A549 (cell line): ENCODE measurements at regions of chr11 and their contacts with region 1.

Region 1: GRCh38 chr11:120172054-120172911 is 34.4 kb upstream of the TRIM29 start:
- DNase-seq: peak; percentile 50 to 64
- ATAC-seq: peak; percentile 55 to 73
- H3K4me3 ChIP-seq: no peak overlapping the region
- H3K27ac ChIP-seq: no peak overlapping the region
- H3K4me1 ChIP-seq: 0 out of 3 replicates have a peak, but pooled peaks cover 3% of the 10 kb centered on the region
- CTCF ChIP-seq: peak; percentile 56
- EP300 ChIP-seq: no peak
- POLR2A ChIP-seq: no peak
- RAD21 ChIP-seq: peak; percentile 79 to 87

Region 2: DNA sequence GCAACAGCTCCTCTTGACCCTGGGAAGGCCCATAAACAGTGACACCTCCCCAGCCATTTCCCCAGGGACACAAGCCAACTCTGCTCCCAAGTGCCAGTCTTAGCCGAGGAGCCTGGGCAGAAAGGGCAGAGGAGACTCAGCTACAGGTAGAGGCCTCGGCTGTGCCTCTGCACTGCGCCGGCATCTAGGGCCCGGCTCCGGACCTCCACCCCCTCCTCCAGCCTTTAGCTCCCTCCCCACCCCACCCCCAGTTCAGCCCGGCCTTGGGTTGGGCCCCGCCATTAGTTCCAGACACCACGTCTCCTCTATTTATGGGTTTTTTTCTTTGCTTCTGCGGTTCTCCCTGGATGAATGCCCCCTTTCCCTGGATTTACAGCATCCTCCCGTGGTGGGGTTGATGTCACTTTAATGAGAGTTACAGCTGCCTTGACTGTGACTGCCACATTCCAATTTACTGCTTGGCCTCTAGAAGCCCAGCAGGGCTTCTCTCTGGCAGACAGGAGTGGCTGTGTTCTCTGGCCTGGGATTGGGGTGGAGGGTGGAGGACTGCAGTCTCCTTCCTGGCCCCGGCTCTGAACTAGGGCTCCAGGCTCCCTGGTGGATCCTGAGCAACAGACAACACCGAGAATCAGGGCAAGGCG is 25.1 kb after region 1 on chr11:
- CTCF ChIA-PET with region 1: interaction called, 24 read pairs
- POLR2A ChIA-PET with region 1: no interaction called
- DNase-seq: no peak
- ATAC-seq: no peak
- H3K4me3 ChIP-seq: no peak overlapping the region
- H3K27ac ChIP-seq: no peak overlapping the region
- H3K4me1 ChIP-seq: no peaks in the 10 kb centered on the region
- CTCF ChIP-seq: no peak
- EP300 ChIP-seq: no peak
- POLR2A ChIP-seq: no peak
- RAD21 ChIP-seq: no peak

Region 3: DNA sequence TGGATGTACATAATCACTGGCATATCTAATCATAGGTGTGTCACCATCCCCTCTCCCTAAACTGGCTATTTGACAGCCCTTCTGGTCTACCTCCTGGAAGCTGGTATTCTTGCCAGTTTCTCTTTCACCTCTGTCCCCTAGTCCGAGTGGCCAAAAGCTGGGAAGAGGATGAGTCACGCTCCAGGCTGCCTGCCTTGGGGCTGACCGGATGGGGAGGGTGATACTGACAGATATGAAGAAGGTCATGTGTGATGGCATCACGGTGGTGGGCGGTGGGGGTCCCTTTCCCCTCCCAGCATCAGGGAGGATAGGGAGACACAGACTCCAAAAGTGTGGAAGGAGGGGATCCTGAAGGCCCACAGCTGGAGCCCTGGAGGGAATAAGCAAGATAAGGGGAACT is 43.4 kb after region 1 on chr11:
- CTCF ChIA-PET with region 1: interaction called, 27 read pairs
- POLR2A ChIA-PET with region 1: no interaction called
- DNase-seq: no peak
- ATAC-seq: no peak
- H3K4me3 ChIP-seq: no peak overlapping the region
- H3K27ac ChIP-seq: no peak overlapping the region
- H3K4me1 ChIP-seq: 0 out of 3 replicates have a peak, but pooled peaks cover 7% of the 10 kb centered on the region
- CTCF ChIP-seq: no peak
- EP300 ChIP-seq: no peak
- POLR2A ChIP-seq: no peak
- RAD21 ChIP-seq: no peak

Region 4: DNA sequence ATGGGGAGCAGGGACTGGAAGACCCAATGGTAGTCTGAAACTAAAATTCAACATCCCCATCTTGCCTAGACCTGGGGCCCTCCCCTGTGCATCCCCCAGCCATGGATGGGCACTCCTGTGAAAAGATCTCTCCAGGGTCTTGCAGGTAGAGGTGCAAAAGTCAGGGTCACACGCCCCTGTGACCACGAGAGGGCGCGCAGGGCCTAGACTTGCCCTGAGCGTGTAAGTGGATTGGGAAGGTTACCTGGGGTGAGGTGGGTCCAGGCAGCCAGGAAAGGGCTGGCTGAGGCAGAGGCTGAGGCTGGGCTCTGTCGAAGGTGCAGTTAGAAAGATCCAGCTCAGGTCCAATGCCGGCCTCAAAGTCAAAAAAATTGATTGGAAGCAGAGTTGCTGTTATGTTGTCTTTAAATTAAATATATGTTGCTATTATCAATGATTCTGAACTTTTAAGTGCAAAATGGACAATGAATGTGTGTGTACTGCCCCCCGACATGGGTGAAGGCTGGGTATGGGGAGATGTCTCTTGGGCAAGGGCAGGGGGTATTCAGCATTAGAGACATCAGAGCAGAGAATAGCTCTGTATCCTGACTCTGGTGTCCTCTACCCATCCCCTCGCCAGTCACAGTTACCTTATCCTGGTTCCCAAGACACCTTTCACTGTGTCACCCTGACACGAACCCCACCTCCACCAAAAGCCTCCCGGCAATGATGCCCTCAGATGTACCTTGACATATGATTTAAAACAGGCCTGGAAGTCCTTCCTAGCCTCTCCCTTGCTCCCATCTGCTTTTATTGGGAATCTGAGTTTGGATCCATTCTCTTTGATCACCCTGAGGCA is 63.0 kb after region 1 on chr11:
- CTCF ChIA-PET with region 1: interaction called, 245 read pairs
- POLR2A ChIA-PET with region 1: no interaction called
- DNase-seq: peak; percentile 64 to 68
- ATAC-seq: peak; percentile 82 to 91; a peak in 5 of 6 replicates
- H3K4me3 ChIP-seq: no peak overlapping the region
- H3K27ac ChIP-seq: no peak overlapping the region
- H3K4me1 ChIP-seq: no peaks in the 10 kb centered on the region
- CTCF ChIP-seq: peak; percentile 66
- EP300 ChIP-seq: no peak
- POLR2A ChIP-seq: no peak
- RAD21 ChIP-seq: peak; percentile 73 to 79